Panc1 (cell line): ENCODE measurements at regions of chr12 and their contacts with region 1.

Region 1: GRCh38 chr12:95712269-95712668 is 78.3 kb downstream of the NTN4 start:
- DNase-seq: no peak
- ATAC-seq: no peak
- H3K4me3 ChIP-seq: no peak overlapping the region
- H3K27ac ChIP-seq: no peak overlapping the region
- H3K4me1 ChIP-seq: no peaks in the 10 kb centered on the region
- H3K27me3 ChIP-seq: no peaks in the 10 kb centered on the region
- CTCF ChIP-seq: no peak

Region 2: GRCh38 chr12:95318071-95318545 is 394.2 kb before region 1 on chr12:
- CTCF ChIA-PET with region 1: no interaction called
- POLR2A ChIA-PET with region 1: no interaction called
- in situ Hi-C with region 1: no loop called
- intact Hi-C with region 1: no loop called
- DNase-seq: peak; percentile 87
- ATAC-seq: peak; percentile 90
- H3K4me3 ChIP-seq: no peak overlapping the region
- H3K27ac ChIP-seq: no peak overlapping the region
- H3K4me1 ChIP-seq: peaks cover 9% of the 10 kb centered on the region; the same call in 1 of the 2 replicates
- H3K27me3 ChIP-seq: no peaks in the 10 kb centered on the region; the same call in 1 of the 2 replicates
- CTCF ChIP-seq: no peak

Region 3: GRCh38 chr12:95802482-95803264 is 90.4 kb after region 1 on chr12:
- CTCF ChIA-PET with region 1: no interaction called
- POLR2A ChIA-PET with region 1: interaction called, 11 read pairs
- in situ Hi-C with region 1: no loop called
- intact Hi-C with region 1: no loop called
- DNase-seq: peak; percentile 93
- ATAC-seq: peak; percentile 92
- H3K4me3 ChIP-seq: peak overlapping the region in 1 of 2 experiments; percentile 24; a peak in 1 of 4 replicates
- H3K27ac ChIP-seq: peak overlapping the region; percentile 67; the same call in 1 of the 2 replicates
- H3K4me1 ChIP-seq: peaks cover 14% of the 10 kb centered on the region; the same call in 1 of the 2 replicates
- H3K27me3 ChIP-seq: no peaks in the 10 kb centered on the region
- CTCF ChIP-seq: no peak